H1 (cell line): ENCODE measurements at regions of chr16 and their contacts with region 1.

Region 1: GRCh38 chr16:67993189-67994039 is 5.9 kb downstream of the DPEP2 start:
- DNase-seq: peak in 1 of 2 experiments; percentile 93
- H3K4me3 ChIP-seq: no peak overlapping the region
- H3K27ac ChIP-seq: no peak overlapping the region
- H3K4me1 ChIP-seq: no peaks in the 10 kb centered on the region; a peak in 3 of 7 replicates
- H3K27me3 ChIP-seq: peaks cover 0 to 12% (median 8%) of the 10 kb centered on the region in 4 experiments; a peak in 5 of 7 replicates
- CTCF ChIP-seq: peak; percentile 90 to 97 (median 94)
- EP300 ChIP-seq: no peak
- POLR2A ChIP-seq: no peak
- RAD21 ChIP-seq: peak; percentile 53 to 65

Region 2: GRCh38 chr16:67979955-67980678 is 13.3 kb before region 1 on chr16 and contains the start of gene DPEP3:
- CTCF ChIA-PET with region 1: interaction called, 33 read pairs
- POLR2A ChIA-PET with region 1: interaction called, 3 read pairs
- DNase-seq: peak in 1 of 2 experiments; percentile 89
- H3K4me3 ChIP-seq: peak within 1 kb of the TSS in 2 of 4 experiments; percentile 3 to 46; a peak in 2 of 8 replicates
- H3K27ac ChIP-seq: no peak within 1 kb of the TSS
- H3K4me1 ChIP-seq: peaks cover 0 to 4% (median 0%) of the 10 kb centered on the region in 4 experiments; a peak in 3 of 7 replicates
- H3K27me3 ChIP-seq: peaks cover 0 to 2% (median 0%) of the 10 kb centered on the region in 4 experiments; a peak in 2 of 7 replicates
- CTCF ChIP-seq: peak; percentile 87 to 100 (median 93)
- EP300 ChIP-seq: peak in 1 of 2 experiments; percentile 34; a peak in 1 of 3 replicates
- POLR2A ChIP-seq: no peak
- RAD21 ChIP-seq: peak; percentile 38 to 49; a peak in 3 of 4 replicates
- total RNA-seq, gene DPEP3: 9.9 and 10.6 TPM in 2 replicates

Region 3: GRCh38 chr16:68005786-68006286 is 12.4 kb after region 1 on chr16:
- CTCF ChIA-PET with region 1: interaction called, 17 read pairs
- POLR2A ChIA-PET with region 1: interaction called, 3 read pairs
- DNase-seq: no peak
- H3K4me3 ChIP-seq: no peak overlapping the region
- H3K27ac ChIP-seq: no peak overlapping the region
- H3K4me1 ChIP-seq: peaks cover 0 to 6% (median 3%) of the 10 kb centered on the region in 4 experiments; a peak in 3 of 7 replicates
- H3K27me3 ChIP-seq: no peaks in the 10 kb centered on the region
- CTCF ChIP-seq: no peak
- EP300 ChIP-seq: no peak
- POLR2A ChIP-seq: no peak
- RAD21 ChIP-seq: no peak

Region 4: GRCh38 chr16:68013440-68013839 is 20.0 kb after region 1 on chr16:
- CTCF ChIA-PET with region 1: interaction called, 12 read pairs
- POLR2A ChIA-PET with region 1: interaction called, 3 read pairs
- DNase-seq: no peak
- H3K4me3 ChIP-seq: no peak overlapping the region
- H3K27ac ChIP-seq: no peak overlapping the region
- H3K4me1 ChIP-seq: peaks cover 0 to 6% (median 3%) of the 10 kb centered on the region in 4 experiments; a peak in 3 of 7 replicates
- H3K27me3 ChIP-seq: no peaks in the 10 kb centered on the region
- CTCF ChIP-seq: no peak
- EP300 ChIP-seq: no peak
- POLR2A ChIP-seq: no peak
- RAD21 ChIP-seq: no peak